ENCODE measurements at regions of chr4 and their contacts with region 1.

Region 1: GRCh38 chr4:113708250-113708649 is 53.3 kb downstream of the CAMK2D start:
- DNase-seq: no peak
- ATAC-seq: peak; percentile 82
- H3K4me3 ChIP-seq: no peak overlapping the region
- H3K27ac ChIP-seq: no peak overlapping the region
- H3K4me1 ChIP-seq: peaks cover 22% of the 10 kb centered on the region
- H3K27me3 ChIP-seq: no peaks in the 10 kb centered on the region
- CTCF ChIP-seq: no peak
- EP300 ChIP-seq: no peak
- POLR2A ChIP-seq: no peak
- RAD21 ChIP-seq: no peak

Region 2: DNA sequence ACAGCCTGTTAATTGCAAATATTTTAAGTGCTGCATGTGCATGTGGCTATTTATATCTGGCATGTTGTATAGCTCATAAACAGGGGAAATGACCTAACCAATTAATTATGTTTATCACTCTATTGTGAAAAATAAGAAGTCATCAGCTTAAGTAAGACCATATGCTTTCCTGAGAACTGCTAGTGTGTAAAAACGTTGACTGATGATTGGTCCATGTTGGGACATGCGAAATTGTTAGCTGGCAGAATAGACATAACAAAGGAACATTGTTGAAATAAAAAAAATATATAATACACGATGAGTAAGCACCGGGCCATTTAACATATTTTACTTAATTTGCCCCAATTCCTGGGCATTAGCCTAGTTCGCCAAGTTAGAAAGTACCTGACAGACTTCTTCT is 451.3 kb before region 1 on chr4:
- CTCF ChIA-PET with region 1: no interaction called
- POLR2A ChIA-PET with region 1: no interaction called
- RAD21 ChIA-PET with region 1: no interaction called
- SMC1A ChIA-PET with region 1: no interaction called
- in situ Hi-C with region 1: no loop called
- intact Hi-C with region 1: loop called (anchors 10 kb)
- DNase-seq: no peak
- ATAC-seq: no peak
- H3K4me3 ChIP-seq: no peak overlapping the region
- H3K27ac ChIP-seq: no peak overlapping the region
- H3K4me1 ChIP-seq: no peaks in the 10 kb centered on the region
- H3K27me3 ChIP-seq: no peaks in the 10 kb centered on the region
- CTCF ChIP-seq: no peak
- EP300 ChIP-seq: no peak
- POLR2A ChIP-seq: no peak
- RAD21 ChIP-seq: no peak

Region 3: GRCh38 chr4:113692809-113693411 is 15.3 kb before region 1 on chr4:
- CTCF ChIA-PET with region 1: interaction called, 4 read pairs
- POLR2A ChIA-PET with region 1: interaction called, 5 read pairs
- RAD21 ChIA-PET with region 1: interaction called, 9 read pairs
- SMC1A ChIA-PET with region 1: interaction called, 27 read pairs
- in situ Hi-C with region 1: no loop called
- intact Hi-C with region 1: no loop called
- DNase-seq: no peak
- ATAC-seq: peak; percentile 89
- H3K4me3 ChIP-seq: no peak overlapping the region; the same call in 1 of the 2 replicates
- H3K27ac ChIP-seq: peak overlapping the region; percentile 52
- H3K4me1 ChIP-seq: peaks cover 16% of the 10 kb centered on the region
- H3K27me3 ChIP-seq: no peaks in the 10 kb centered on the region
- CTCF ChIP-seq: no peak
- EP300 ChIP-seq: peak in 1 of 2 experiments; percentile 56; a peak in 1 of 4 replicates
- POLR2A ChIP-seq: no peak
- RAD21 ChIP-seq: no peak

Region 4: GRCh38 chr4:113718252-113718651 is 10.0 kb after region 1 on chr4:
- CTCF ChIA-PET with region 1: interaction called, 6 read pairs
- POLR2A ChIA-PET with region 1: interaction called, 7 read pairs
- RAD21 ChIA-PET with region 1: interaction called, 4 read pairs
- SMC1A ChIA-PET with region 1: interaction called, 47 read pairs
- in situ Hi-C with region 1: no loop called
- intact Hi-C with region 1: no loop called
- DNase-seq: no peak
- ATAC-seq: no peak
- H3K4me3 ChIP-seq: no peak overlapping the region
- H3K27ac ChIP-seq: no peak overlapping the region
- H3K4me1 ChIP-seq: no peaks in the 10 kb centered on the region
- H3K27me3 ChIP-seq: no peaks in the 10 kb centered on the region
- CTCF ChIP-seq: no peak
- EP300 ChIP-seq: no peak
- POLR2A ChIP-seq: no peak
- RAD21 ChIP-seq: no peak

Region 5: DNA sequence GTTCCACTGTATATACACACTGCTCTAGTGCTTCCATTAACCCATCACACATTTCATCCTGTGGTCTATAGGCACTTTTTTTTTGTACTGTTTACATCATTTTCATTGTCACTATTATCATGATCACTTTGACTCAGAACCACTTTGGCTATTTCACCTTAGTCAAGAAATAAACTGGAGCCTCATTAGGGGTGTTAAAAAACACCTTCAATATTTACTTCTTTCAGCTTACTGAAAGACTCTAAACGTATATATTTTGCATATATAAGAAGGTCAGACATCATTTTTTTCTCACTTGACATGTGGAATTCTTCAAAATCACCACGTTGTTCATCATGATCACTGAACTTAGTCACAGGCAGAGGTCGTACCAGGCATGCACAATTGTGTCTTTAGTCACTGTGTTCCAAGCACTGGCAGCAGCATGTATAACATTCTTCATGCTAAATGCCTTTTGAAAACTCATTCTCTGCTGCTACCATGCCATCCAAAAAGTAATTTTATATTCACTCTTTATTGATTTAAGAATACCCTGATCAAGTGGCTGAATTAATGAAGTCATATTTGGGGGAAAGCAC is 500.4 kb after region 1 on chr4:
- CTCF ChIA-PET with region 1: no interaction called
- POLR2A ChIA-PET with region 1: no interaction called
- RAD21 ChIA-PET with region 1: no interaction called
- SMC1A ChIA-PET with region 1: no interaction called
- in situ Hi-C with region 1: no loop called
- intact Hi-C with region 1: no loop called
- DNase-seq: no peak
- ATAC-seq: peak; percentile 74
- H3K4me3 ChIP-seq: no peak overlapping the region
- H3K27ac ChIP-seq: no peak overlapping the region
- H3K4me1 ChIP-seq: no peaks in the 10 kb centered on the region
- H3K27me3 ChIP-seq: no peaks in the 10 kb centered on the region
- CTCF ChIP-seq: no peak
- EP300 ChIP-seq: no peak
- POLR2A ChIP-seq: no peak
- RAD21 ChIP-seq: no peak

Measured in GM12878 (cell line).